ENCODE measurements at regions of chr5 and their contacts with region 1.

Region 1: GRCh38 chr5:179648410-179648809 is 24.9 kb upstream of the HNRNPH1 start:
- DNase-seq: no peak
- H3K4me3 Mint-ChIP-seq: no peak overlapping the region
- H3K27ac Mint-ChIP-seq: no peak overlapping the region
- H3K4me1 Mint-ChIP-seq: no peaks in the 10 kb centered on the region
- H3K27me3 Mint-ChIP-seq: peaks cover 3% of the 10 kb centered on the region

Region 2: DNA sequence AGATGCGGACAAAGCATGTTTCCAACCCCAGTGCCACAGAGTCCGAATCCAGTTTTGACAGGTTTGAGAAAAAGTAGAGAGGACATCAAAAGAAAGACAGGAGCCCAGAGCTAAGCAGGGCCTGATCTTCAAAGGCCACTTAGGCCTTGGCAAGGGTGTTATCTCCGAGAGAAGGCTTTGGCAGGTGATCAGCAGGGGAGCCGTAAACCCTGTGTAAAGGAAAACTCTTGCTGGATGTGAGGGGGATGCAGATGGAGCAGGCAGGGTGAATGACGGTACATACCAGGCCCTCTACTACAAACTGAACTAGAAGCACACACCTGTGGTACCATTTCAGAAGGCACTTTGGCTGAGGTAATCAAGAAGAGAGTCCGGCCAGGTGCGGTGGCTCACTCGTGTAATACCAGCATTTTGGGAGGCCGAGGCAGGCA is 23.6 kb before region 1 on chr5:
- CTCF ChIA-PET with region 1: no interaction called
- POLR2A ChIA-PET with region 1: interaction called, 10 read pairs
- DNase-seq: no peak
- H3K4me3 Mint-ChIP-seq: peak overlapping the region; percentile 88
- H3K27ac Mint-ChIP-seq: peak overlapping the region; percentile 99
- H3K4me1 Mint-ChIP-seq: peaks cover 29% of the 10 kb centered on the region
- H3K27me3 Mint-ChIP-seq: no peaks in the 10 kb centered on the region

Region 3: GRCh38 chr5:179678223-179679013 is 30.0 kb after region 1 on chr5:
- CTCF ChIA-PET with region 1: no interaction called
- POLR2A ChIA-PET with region 1: no interaction called
- DNase-seq: peak; percentile 94
- H3K4me3 Mint-ChIP-seq: peak overlapping the region; percentile 99
- H3K27ac Mint-ChIP-seq: peak overlapping the region; percentile 99
- H3K4me1 Mint-ChIP-seq: peaks cover 33% of the 10 kb centered on the region
- H3K27me3 Mint-ChIP-seq: no peaks in the 10 kb centered on the region

Measured in activated CD4-positive, alpha-beta T cell treated with anti-CD3 and anti-CD28 coated beads, Interleukin-2, amount 10 ng/mL, durations not matched to agents 7 days and 5 days (primary cell).